ENCODE measurements at regions of chr4 and their contacts with region 1.

Region 1: GRCh38 chr4:98493296-98493695 is 165.1 kb downstream of the TSPAN5 start:
- DNase-seq: no peak
- ATAC-seq: peak; percentile 77
- H3K4me3 ChIP-seq: no peak overlapping the region
- H3K27ac ChIP-seq: no peak overlapping the region
- H3K4me1 ChIP-seq: no peaks in the 10 kb centered on the region
- H3K27me3 ChIP-seq: no peaks in the 10 kb centered on the region
- CTCF ChIP-seq: no peak
- EP300 ChIP-seq: no peak
- POLR2A ChIP-seq: no peak
- RAD21 ChIP-seq: no peak

Region 2: GRCh38 chr4:98506462-98507132 is 13.3 kb after region 1 on chr4:
- CTCF ChIA-PET with region 1: interaction called, 9 read pairs
- POLR2A ChIA-PET with region 1: interaction called, 3 read pairs
- RAD21 ChIA-PET with region 1: no interaction called
- SMC1A ChIA-PET with region 1: interaction called, 15 read pairs
- in situ Hi-C with region 1: no loop called
- intact Hi-C with region 1: no loop called
- DNase-seq: no peak
- ATAC-seq: no peak
- H3K4me3 ChIP-seq: no peak overlapping the region
- H3K27ac ChIP-seq: no peak overlapping the region
- H3K4me1 ChIP-seq: no peaks in the 10 kb centered on the region
- H3K27me3 ChIP-seq: no peaks in the 10 kb centered on the region
- CTCF ChIP-seq: peak in 2 of 3 experiments; percentile 12 to 16; a peak in 2 of 6 replicates
- EP300 ChIP-seq: no peak
- POLR2A ChIP-seq: no peak
- RAD21 ChIP-seq: 0 out of 2 replicates have a peak, but pooled peaks have one; percentile 18

Region 3: DNA sequence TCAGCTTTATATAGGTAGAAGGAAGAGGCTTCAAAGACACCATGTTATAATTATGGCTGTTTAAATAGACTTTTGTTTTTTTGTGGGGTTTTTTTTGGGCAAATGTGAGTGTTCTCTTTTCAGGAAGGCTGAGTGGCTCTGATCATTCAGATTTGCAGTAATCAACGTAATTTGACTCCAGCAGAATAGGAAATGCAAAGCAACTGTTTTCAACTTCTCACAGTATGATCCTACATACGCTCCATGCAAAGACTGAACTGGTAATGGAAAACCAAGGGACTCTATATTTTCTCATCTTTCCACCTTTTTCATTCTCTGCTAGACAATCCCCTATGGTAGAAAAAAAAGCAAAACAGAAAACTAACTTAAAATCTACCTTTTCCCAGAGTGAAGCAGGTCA is 817.1 kb after region 1 on chr4:
- CTCF ChIA-PET with region 1: no interaction called
- POLR2A ChIA-PET with region 1: no interaction called
- RAD21 ChIA-PET with region 1: no interaction called
- SMC1A ChIA-PET with region 1: no interaction called
- in situ Hi-C with region 1: no loop called
- intact Hi-C with region 1: no loop called
- DNase-seq: no peak
- ATAC-seq: no peak
- H3K4me3 ChIP-seq: no peak overlapping the region
- H3K27ac ChIP-seq: no peak overlapping the region
- H3K4me1 ChIP-seq: no peaks in the 10 kb centered on the region
- H3K27me3 ChIP-seq: no peaks in the 10 kb centered on the region
- CTCF ChIP-seq: no peak
- EP300 ChIP-seq: no peak
- POLR2A ChIP-seq: no peak
- RAD21 ChIP-seq: no peak